Activated CD8-positive, alpha-beta T cell treated with anti-CD3 and anti-CD28 coated beads, Interleukin-2, amount 10 ng/mL, durations not matched to agents 7 days and 5 days (primary cell): ENCODE measurements at regions of chr17 and their contacts with region 1.

Region 1: DNA sequence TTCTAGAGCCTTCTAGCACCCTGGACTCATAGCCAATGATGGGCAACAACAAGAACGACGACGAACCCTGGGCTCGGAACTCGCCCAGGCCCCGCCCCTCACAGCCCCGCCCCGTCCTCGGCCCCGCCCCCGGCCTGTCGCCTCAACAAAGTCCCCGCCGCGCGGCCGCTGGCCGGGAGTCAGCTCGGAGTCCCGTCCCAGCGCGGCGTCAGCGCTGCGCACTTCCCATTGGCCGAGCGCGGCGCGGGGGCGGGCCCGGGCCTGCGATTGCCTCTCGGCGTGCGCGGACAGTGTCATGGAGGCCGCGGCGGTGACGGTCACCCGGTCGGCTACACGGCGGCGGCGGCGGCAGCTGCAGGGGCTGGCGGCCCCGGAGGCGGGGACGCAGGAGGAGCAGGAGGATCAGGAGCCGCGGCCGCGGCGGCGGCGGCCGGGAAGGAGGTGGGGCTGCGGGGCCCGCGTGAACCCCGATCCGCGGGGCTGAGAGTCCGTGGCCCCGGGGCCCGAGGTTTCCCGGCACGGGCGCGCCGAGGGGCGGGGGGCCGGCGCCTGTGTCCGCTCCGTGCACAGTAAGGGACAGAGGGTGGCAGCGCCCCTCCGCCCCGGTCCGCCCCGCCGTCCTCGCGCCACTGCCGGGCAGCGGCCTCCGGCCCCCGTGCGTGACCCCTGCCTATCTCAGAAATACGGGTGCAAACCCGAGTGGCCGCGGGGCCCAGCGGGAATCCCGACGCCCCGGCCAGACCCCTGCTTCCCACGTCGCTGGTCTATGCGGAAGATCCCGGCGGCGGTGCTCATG is at the start of gene ENGASE:
- DNase-seq: peak; percentile 91
- ATAC-seq: peak; percentile 98
- H3K4me3 Mint-ChIP-seq: peak within 1 kb of the TSS; percentile 79
- H3K27ac Mint-ChIP-seq: peak within 1 kb of the TSS; percentile 67
- H3K4me1 Mint-ChIP-seq: peaks cover 18% of the 10 kb centered on the region
- H3K27me3 Mint-ChIP-seq: peaks cover 3% of the 10 kb centered on the region
- total RNA-seq, gene ENGASE: 38.2 to 41.1 TPM

Region 2: GRCh38 chr17:79009397-79010308 is 65.2 kb before region 1 on chr17 and contains the start of gene CANT1:
- CTCF ChIA-PET with region 1: no interaction called
- POLR2A ChIA-PET with region 1: no interaction called
- DNase-seq: peak; percentile 87
- ATAC-seq: peak; percentile 96
- H3K4me3 Mint-ChIP-seq: peak within 1 kb of the TSS; percentile 91
- H3K27ac Mint-ChIP-seq: peak within 1 kb of the TSS; percentile 90
- H3K4me1 Mint-ChIP-seq: peaks cover 53% of the 10 kb centered on the region
- H3K27me3 Mint-ChIP-seq: peaks cover 12% of the 10 kb centered on the region
- total RNA-seq, gene CANT1: 74.4 to 78.5 TPM

Region 3: GRCh38 chr17:79087428-79088143 is 12.7 kb after region 1 on chr17:
- CTCF ChIA-PET with region 1: interaction called, 14 read pairs
- POLR2A ChIA-PET with region 1: no interaction called
- DNase-seq: peak; percentile 79
- ATAC-seq: peak; percentile 77
- H3K4me3 Mint-ChIP-seq: no peak overlapping the region
- H3K27ac Mint-ChIP-seq: no peak overlapping the region
- H3K4me1 Mint-ChIP-seq: peaks cover 4% of the 10 kb centered on the region
- H3K27me3 Mint-ChIP-seq: no peaks in the 10 kb centered on the region